ENCODE measurements at regions of chr15 and their contacts with region 1.

Region 1: DNA sequence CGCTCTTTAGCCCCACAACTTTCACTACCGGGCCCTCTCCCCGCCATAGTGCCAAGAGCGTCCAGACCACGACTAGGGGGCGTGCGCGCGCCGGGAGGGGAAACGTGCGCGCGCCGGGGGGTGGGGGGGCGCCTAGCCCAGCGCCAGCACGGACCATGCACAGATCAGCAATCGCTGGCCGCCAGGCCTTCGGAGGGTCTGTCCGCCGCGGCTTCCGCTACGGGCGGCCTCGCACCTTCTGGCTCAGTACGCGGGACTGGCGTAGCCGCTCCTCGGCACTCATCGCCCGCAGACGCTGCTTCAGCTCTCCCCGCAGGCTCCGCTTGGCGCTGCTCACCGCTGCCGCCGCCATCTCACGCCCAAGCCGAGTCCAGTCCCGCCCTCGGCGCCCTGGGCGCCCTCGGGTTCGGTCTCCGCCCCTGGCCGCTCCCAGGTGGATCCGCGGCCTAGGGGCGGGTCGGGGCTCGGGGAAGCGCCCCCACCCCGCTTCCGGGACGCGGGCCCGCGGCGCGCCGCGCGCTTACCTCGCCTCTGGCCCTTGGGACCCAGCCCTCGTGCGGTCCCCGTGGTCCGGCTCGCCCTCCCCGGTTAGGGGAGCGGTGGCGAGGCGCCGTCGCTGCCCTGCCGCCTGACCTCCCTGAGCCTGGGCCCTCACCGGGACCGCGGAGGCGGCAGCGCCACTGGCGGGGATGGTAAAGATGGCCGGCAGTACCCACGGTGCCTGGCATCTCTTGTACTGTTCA is at the start of gene MTHFS:
- DNase-seq: peak; percentile 81
- ATAC-seq: peak; percentile 94 to 99
- total RNA-seq, gene MTHFS: 10.4 to 23.5 TPM

Region 2: DNA sequence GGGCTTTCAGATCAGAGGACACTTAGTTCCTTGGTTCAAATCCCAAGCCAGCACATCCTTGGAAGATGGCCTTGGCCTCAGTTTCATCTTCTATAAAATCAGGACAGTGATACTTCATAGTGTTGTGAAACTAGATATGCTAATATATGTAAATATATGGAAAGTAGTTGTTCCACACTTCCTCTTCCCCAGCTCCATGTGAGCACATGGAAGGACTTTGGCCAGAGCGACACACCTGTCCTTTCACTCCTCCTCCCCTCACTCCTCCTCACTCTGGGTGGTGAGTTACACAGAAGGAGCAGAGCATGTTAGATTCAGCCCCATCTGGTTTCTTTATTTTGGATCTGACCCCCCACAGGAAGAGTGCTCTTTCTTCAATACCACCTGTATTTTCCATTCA is 65.2 kb before region 1 on chr15:
- intact Hi-C with region 1: no loop called
- DNase-seq: no peak
- ATAC-seq: no peak

Region 3: GRCh38 chr15:79844221-79844620 is 52.6 kb before region 1 on chr15:
- intact Hi-C with region 1: no loop called
- DNase-seq: no peak
- ATAC-seq: no peak

Region 4: GRCh38 chr15:79989682-79990081 is 92.9 kb after region 1 on chr15:
- intact Hi-C with region 1: loop called in 1 of 2 experiments (anchors 1 kb)
- DNase-seq: no peak
- ATAC-seq: peak in 1 of 2 donors; percentile 61